ENCODE measurements at regions of chrX and their contacts with region 1.

Region 1: GRCh38 chrX:46903458-46904242 is 8.6 kb upstream of the JADE3 start:
- DNase-seq: peak; percentile 82
- ATAC-seq: peak; percentile 99
- H3K4me3 ChIP-seq: peak overlapping the region in 4 of 5 experiments; percentile 35 to 56 (median 48)
- H3K4me3 Mint-ChIP-seq: peak overlapping the region; percentile 82
- H3K27ac ChIP-seq: no peak overlapping the region
- H3K27ac Mint-ChIP-seq: no peak overlapping the region
- H3K4me1 ChIP-seq: peaks cover 0 to 7% of the 10 kb centered on the region in 2 donors
- H3K4me1 Mint-ChIP-seq: no peaks in the 10 kb centered on the region
- H3K27me3 ChIP-seq: no peaks in the 10 kb centered on the region
- H3K27me3 Mint-ChIP-seq: no peaks in the 10 kb centered on the region
- CTCF ChIP-seq: peak; percentile 75

Region 2: DNA sequence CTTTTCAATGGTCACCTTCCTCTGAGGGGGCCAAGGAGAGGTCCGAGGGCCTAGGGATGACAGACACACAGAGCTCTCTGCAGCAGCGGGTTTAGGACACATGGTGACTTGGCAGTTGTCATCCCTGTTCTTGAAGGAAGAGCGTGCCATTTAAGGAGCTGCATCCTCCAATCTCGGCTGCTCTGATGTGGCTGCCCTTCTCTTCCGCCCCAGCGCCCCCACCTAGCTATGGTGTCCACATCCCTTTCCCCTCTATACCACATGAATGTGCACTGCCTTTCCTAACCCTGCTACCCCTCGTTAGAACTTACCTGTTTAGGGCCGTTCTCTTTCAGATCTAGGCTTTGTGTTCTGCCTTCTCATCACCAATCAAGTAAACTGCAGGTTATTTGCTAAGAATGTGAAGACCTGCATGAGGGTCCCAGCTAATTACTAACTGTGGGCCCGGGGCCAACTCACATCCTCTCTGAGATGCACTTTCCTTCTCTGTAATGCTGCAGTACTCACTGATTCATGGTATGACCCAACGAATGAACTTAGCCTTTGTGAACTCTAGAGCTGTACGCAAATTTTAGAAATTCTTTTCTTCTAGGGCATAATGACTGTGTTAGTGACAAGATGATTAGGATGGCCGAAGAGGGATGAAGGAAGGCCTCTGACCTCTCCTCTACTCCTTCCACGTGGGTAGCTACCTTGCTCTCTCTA is 291.8 kb before region 1 on chrX:
- CTCF ChIA-PET with region 1: no interaction called
- POLR2A ChIA-PET with region 1: no interaction called
- intact Hi-C with region 1: no loop called
- DNase-seq: no peak
- ATAC-seq: no peak
- H3K4me3 ChIP-seq: no peak overlapping the region
- H3K4me3 Mint-ChIP-seq: no peak overlapping the region
- H3K27ac ChIP-seq: no peak overlapping the region
- H3K27ac Mint-ChIP-seq: no peak overlapping the region
- H3K4me1 ChIP-seq: no peaks in the 10 kb centered on the region
- H3K4me1 Mint-ChIP-seq: no peaks in the 10 kb centered on the region
- H3K27me3 ChIP-seq: no peaks in the 10 kb centered on the region
- H3K27me3 Mint-ChIP-seq: no peaks in the 10 kb centered on the region
- CTCF ChIP-seq: no peak

Region 3: GRCh38 chrX:46978341-46979291 is 75.0 kb after region 1 on chrX:
- CTCF ChIA-PET with region 1: interaction called, 32 read pairs
- POLR2A ChIA-PET with region 1: interaction called, 7 read pairs
- intact Hi-C with region 1: loop called (anchors 1 kb)
- DNase-seq: peak; percentile 82
- ATAC-seq: peak; percentile 84
- H3K4me3 ChIP-seq: no peak overlapping the region
- H3K4me3 Mint-ChIP-seq: no peak overlapping the region
- H3K27ac ChIP-seq: no peak overlapping the region
- H3K27ac Mint-ChIP-seq: peak overlapping the region; percentile 1
- H3K4me1 ChIP-seq: peaks cover 9 to 15% of the 10 kb centered on the region in 2 donors
- H3K4me1 Mint-ChIP-seq: peaks cover 26% of the 10 kb centered on the region
- H3K27me3 ChIP-seq: no peaks in the 10 kb centered on the region
- H3K27me3 Mint-ChIP-seq: no peaks in the 10 kb centered on the region
- CTCF ChIP-seq: peak; percentile 67

Region 4: DNA sequence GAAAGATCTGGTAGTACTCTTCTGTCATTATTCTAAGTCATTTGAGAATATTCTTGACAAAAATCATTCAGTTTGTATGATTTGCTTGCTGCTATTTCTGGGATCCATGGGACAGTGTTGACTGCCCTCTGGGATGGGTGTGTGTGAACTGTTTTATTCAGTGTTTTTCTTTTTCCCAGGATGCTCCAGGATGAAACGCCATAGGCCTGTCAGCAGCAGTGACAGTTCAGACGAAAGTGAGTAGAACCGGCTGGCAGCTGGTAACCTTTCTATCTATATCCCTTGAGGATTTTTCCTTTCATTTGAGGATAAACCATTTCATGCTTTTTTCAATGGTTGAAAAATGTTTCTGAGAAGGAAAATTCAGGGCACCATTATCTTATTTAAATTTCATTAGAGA is 81.1 kb after region 1 on chrX:
- CTCF ChIA-PET with region 1: interaction called, 14 read pairs
- POLR2A ChIA-PET with region 1: interaction called, 7 read pairs
- intact Hi-C with region 1: no loop called
- DNase-seq: no peak
- ATAC-seq: no peak
- H3K4me3 ChIP-seq: no peak overlapping the region
- H3K4me3 Mint-ChIP-seq: no peak overlapping the region
- H3K27ac ChIP-seq: no peak overlapping the region
- H3K27ac Mint-ChIP-seq: no peak overlapping the region
- H3K4me1 ChIP-seq: no peaks in the 10 kb centered on the region
- H3K4me1 Mint-ChIP-seq: peaks cover 8% of the 10 kb centered on the region
- H3K27me3 ChIP-seq: no peaks in the 10 kb centered on the region
- H3K27me3 Mint-ChIP-seq: no peaks in the 10 kb centered on the region
- CTCF ChIP-seq: no peak

Region 5: DNA sequence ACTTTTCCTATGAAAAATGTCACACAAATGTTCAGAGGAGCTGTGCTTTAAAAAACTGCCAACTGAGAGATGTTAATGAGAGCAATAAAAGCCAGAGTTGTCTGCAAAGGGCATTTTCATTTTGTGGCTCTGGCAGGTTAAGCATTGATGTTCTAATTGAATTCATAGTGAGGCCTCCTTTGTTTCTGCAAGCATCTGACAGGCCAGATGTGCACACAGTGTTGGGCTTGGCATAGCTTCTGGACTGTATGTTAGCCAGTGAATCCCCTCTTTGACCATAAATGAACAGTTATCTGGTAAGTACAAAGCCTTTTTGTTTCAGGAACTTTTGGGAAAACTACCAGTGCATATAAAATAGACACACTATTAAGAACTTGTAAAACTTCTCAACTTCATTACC is 90.4 kb after region 1 on chrX:
- CTCF ChIA-PET with region 1: interaction called, 10 read pairs
- POLR2A ChIA-PET with region 1: no interaction called
- intact Hi-C with region 1: no loop called
- DNase-seq: no peak
- ATAC-seq: no peak
- H3K4me3 ChIP-seq: no peak overlapping the region
- H3K4me3 Mint-ChIP-seq: no peak overlapping the region
- H3K27ac ChIP-seq: no peak overlapping the region
- H3K27ac Mint-ChIP-seq: no peak overlapping the region
- H3K4me1 ChIP-seq: no peaks in the 10 kb centered on the region
- H3K4me1 Mint-ChIP-seq: peaks cover 2% of the 10 kb centered on the region
- H3K27me3 ChIP-seq: no peaks in the 10 kb centered on the region
- H3K27me3 Mint-ChIP-seq: no peaks in the 10 kb centered on the region
- CTCF ChIP-seq: no peak

Region 6: DNA sequence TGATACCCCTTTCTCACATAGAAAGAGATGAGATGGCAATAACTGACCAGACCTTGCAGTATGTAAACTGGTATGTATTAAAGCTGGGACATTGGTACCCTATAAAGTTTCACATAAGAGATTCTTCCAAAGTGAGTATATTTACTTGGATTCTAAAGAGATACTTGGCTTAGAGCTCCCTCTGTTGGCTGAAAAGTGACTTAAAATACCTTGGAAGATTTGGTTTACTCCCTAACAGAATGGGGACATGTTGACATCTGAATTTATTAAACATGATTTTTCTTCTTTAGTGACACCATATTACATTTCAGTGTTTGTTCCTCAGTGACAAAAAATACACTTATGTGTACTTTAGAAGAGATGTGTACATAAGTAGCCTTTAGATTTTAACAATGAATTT is 126.7 kb after region 1 on chrX:
- CTCF ChIA-PET with region 1: interaction called, 57 read pairs
- POLR2A ChIA-PET with region 1: no interaction called
- intact Hi-C with region 1: loop called (anchors 1 kb)
- DNase-seq: peak; percentile 69
- ATAC-seq: no peak
- H3K4me3 ChIP-seq: no peak overlapping the region
- H3K4me3 Mint-ChIP-seq: no peak overlapping the region
- H3K27ac ChIP-seq: no peak overlapping the region
- H3K27ac Mint-ChIP-seq: no peak overlapping the region
- H3K4me1 ChIP-seq: no peaks in the 10 kb centered on the region
- H3K4me1 Mint-ChIP-seq: peaks cover 7% of the 10 kb centered on the region
- H3K27me3 ChIP-seq: no peaks in the 10 kb centered on the region
- H3K27me3 Mint-ChIP-seq: no peaks in the 10 kb centered on the region
- CTCF ChIP-seq: peak; percentile 73

Region 7: GRCh38 chrX:47093248-47093647 is 189.6 kb after region 1 on chrX:
- CTCF ChIA-PET with region 1: interaction called, 13 read pairs
- POLR2A ChIA-PET with region 1: no interaction called
- intact Hi-C with region 1: loop called (anchors 1 kb)
- DNase-seq: peak; percentile 30
- ATAC-seq: no peak
- H3K4me3 ChIP-seq: no peak overlapping the region
- H3K4me3 Mint-ChIP-seq: no peak overlapping the region
- H3K27ac ChIP-seq: no peak overlapping the region
- H3K27ac Mint-ChIP-seq: no peak overlapping the region
- H3K4me1 ChIP-seq: no peaks in the 10 kb centered on the region
- H3K4me1 Mint-ChIP-seq: no peaks in the 10 kb centered on the region
- H3K27me3 ChIP-seq: no peaks in the 10 kb centered on the region
- H3K27me3 Mint-ChIP-seq: no peaks in the 10 kb centered on the region
- CTCF ChIP-seq: peak; percentile 64